ENCODE measurements at regions of chr3 and their contacts with region 1.

Region 1: GRCh38 chr3:180802837-180803236 is 109.6 kb upstream of the FXR1 start:
- DNase-seq: peak; percentile 10
- ATAC-seq: peak; percentile 70; the same call in 1 of the 2 replicates
- H3K4me3 ChIP-seq: no peak overlapping the region
- H3K27ac ChIP-seq: no peak overlapping the region
- H3K4me1 ChIP-seq: no peaks in the 10 kb centered on the region
- H3K27me3 ChIP-seq: no peaks in the 10 kb centered on the region
- CTCF ChIP-seq: peak; percentile 74; the same call in 1 of the 2 replicates

Region 2: GRCh38 chr3:180855364-180855763 is 52.5 kb after region 1 on chr3:
- CTCF ChIA-PET with region 1: no interaction called
- POLR2A ChIA-PET with region 1: no interaction called
- in situ Hi-C with region 1: no loop called
- intact Hi-C with region 1: loop called (anchors 5 kb)
- DNase-seq: no peak
- ATAC-seq: peak; percentile 68; the same call in 1 of the 2 replicates
- H3K4me3 ChIP-seq: no peak overlapping the region
- H3K27ac ChIP-seq: no peak overlapping the region
- H3K4me1 ChIP-seq: no peaks in the 10 kb centered on the region
- H3K27me3 ChIP-seq: no peaks in the 10 kb centered on the region
- CTCF ChIP-seq: peak; percentile 69

Region 3: DNA sequence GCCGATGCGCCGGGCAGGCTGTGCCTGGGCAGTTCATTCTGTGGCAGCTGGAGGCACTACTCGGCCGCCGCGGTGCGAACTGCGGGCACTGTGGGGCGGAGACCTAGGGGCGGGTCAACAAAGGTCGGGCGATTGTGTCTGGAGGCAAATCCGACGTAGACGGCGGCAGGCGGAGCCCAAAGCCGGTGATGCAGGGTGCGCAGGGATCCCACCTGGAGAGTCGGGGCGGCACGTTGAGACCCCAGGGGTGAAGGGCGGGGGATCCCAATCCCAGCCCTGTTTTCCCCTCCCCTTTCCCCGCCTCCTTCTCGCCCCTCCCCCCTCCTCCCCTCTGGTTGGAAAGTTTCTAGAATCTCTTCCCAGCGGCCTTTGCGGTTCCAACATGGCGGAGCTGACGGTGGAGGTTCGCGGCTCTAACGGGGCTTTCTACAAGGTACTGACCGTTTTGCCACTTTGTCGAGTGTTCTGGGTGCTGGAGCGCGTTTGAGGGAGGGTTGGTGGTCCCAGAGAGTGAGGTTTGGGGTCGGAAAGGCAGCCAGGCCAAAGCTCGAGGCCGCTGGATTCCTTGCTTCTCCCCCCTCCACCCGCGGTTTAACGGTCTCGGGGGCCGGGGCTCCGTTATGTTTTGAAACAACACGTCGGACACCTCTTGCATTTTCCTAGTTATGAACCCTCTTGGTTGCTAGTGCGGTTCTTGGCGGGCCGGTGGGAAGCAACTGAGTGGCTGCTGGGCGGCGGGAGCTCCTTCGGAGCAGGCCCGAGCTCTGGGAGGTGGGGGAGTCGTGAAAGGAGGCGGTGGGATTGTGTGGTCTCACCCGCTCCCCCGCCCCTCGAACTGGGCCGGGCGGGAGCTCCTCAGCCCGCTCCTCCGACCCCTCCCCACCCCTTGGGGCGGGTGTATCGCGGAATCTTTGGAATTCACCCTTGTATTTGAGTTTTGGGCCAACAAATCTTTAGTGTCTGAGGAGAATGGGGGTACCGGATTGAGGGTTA is 109.8 kb after region 1 on chr3 and contains the start of gene FXR1:
- CTCF ChIA-PET with region 1: interaction called, 11 read pairs
- POLR2A ChIA-PET with region 1: no interaction called
- in situ Hi-C with region 1: no loop called
- intact Hi-C with region 1: no loop called
- DNase-seq: peak; percentile 74
- ATAC-seq: peak; percentile 99
- H3K4me3 ChIP-seq: peak within 1 kb of the TSS; percentile 89 to 92
- H3K27ac ChIP-seq: peak within 1 kb of the TSS; percentile 97
- H3K4me1 ChIP-seq: peaks cover 26% of the 10 kb centered on the region
- H3K27me3 ChIP-seq: no peaks in the 10 kb centered on the region
- CTCF ChIP-seq: peak; percentile 86
- total RNA-seq, gene FXR1: 180 TPM

Region 4: GRCh38 chr3:180989291-180990163 is 186.7 kb after region 1 on chr3 and contains the start of gene DNAJC19:
- CTCF ChIA-PET with region 1: no interaction called
- POLR2A ChIA-PET with region 1: no interaction called
- in situ Hi-C with region 1: no loop called
- intact Hi-C with region 1: loop called (anchors 10 kb)
- DNase-seq: peak; percentile 87
- ATAC-seq: peak; percentile 99
- H3K4me3 ChIP-seq: peak within 1 kb of the TSS; percentile 89 to 99
- H3K27ac ChIP-seq: peak within 1 kb of the TSS; percentile 92
- H3K4me1 ChIP-seq: peaks cover 5% of the 10 kb centered on the region; the same call in 1 of the 2 replicates
- H3K27me3 ChIP-seq: peaks cover 6% of the 10 kb centered on the region; the same call in 1 of the 2 replicates
- CTCF ChIP-seq: no peak
- total RNA-seq, gene DNAJC19: 56.8 TPM

Region 5: DNA sequence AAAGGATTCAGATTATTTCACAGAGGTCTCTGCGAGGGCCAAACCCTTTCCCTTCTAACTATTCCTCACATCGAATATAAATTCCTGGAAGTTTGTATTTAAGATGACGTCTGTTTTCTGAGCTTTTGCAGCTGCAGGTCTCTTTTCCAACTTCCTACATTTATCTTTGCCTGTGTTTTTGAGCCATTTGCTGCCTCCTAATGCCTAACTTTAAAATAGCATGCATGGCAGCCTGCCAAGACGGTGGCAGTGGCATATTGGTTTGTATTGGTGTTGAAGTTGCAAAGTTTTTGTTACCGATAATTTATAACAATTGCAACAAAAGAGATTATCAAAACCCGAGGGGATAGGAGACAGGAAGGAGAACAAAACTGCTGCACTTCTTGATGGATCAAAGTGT is 373.8 kb after region 1 on chr3:
- CTCF ChIA-PET with region 1: no interaction called
- POLR2A ChIA-PET with region 1: no interaction called
- in situ Hi-C with region 1: no loop called
- intact Hi-C with region 1: loop called (anchors 10 kb)
- DNase-seq: peak; percentile 18
- ATAC-seq: no peak
- H3K4me3 ChIP-seq: no peak overlapping the region
- H3K27ac ChIP-seq: no peak overlapping the region
- H3K4me1 ChIP-seq: no peaks in the 10 kb centered on the region
- H3K27me3 ChIP-seq: 0 out of 2 replicates have a peak, but pooled peaks cover 9% of the 10 kb centered on the region
- CTCF ChIP-seq: peak; percentile 76